Heart right ventricle (tissue), 16 donors: ENCODE measurements at regions of chr15 and their contacts with region 1.

Region 1: DNA sequence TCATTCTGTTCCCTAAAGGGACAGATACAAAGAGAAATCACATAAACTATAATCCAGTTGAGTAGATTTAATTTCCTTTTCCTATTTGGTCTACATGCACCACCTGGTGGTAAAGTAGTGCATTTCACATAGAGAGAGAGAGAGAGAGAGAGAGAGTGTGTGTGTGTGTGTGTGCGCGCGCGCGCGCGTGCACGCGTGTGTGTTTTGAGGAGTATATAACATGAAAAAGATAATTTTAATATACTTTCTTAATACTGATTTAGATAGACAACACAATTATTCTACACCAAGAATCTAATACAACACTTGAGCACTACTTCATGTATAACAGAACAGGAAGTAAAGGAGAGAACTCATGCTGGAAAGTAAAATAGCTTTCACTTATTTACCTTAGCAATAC is 1.1 kb upstream of the FGF7 start:
- DNase-seq: peak; percentile 24 to 47
- ATAC-seq: peak; percentile 45 to 78 (median 52)
- H3K4me3 ChIP-seq: peak overlapping the region in 9 of 10 donors; percentile 2 to 54 (median 23)
- H3K27ac ChIP-seq: peak overlapping the region in 4 of 10 donors; percentile 65 to 80 (median 76)
- H3K4me1 ChIP-seq: peaks cover 0 to 8% (median 0%) of the 10 kb centered on the region in 9 donors
- H3K27me3 ChIP-seq: no peaks in the 10 kb centered on the region
- CTCF ChIP-seq: peak; percentile 39 to 83 (median 70)

Region 2: DNA sequence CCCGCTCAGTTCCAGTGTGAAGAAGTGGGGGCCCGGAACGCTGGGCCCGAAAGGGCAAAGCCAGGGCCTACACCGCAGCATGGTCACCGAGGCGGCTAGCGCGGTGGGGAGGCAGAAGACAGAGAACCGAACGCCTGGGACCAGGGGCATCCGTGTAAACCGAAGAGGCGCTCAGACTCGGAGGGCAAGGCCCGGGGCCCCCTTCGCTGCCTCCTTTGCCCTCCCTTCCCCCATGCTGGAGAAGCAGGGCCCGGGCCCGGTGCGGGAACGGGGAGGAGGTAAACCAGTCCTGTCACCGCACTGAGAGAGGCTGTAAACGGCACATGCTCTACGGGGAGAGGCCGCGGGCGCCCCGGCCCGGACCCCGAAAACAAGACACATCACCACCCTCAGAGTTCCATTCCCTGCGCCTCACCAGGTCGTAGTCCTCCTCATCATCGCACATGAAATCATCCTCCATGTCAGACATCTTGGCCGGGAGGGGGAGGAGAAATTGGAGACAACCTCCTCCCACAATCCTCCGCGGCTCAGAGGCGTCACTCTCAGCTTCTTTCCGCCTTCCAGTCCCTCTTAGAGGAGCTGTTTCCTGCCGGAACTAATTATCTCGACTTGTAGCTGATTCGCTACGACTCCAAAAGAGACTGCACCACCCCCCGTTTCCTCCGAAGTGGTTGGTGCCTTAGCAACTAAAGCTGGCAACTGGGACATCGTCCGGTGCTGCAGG is 266.7 kb before region 1 on chr15 and contains the start of gene COPS2:
- intact Hi-C with region 1: loop called in 1 of 10 experiments (anchors 5 kb)
- DNase-seq: peak; percentile 86 to 96
- ATAC-seq: peak; percentile 98 to 99 (median 99)
- H3K4me3 ChIP-seq: peak within 1 kb of the TSS; percentile 84 to 98 (median 92)
- H3K27ac ChIP-seq: peak within 1 kb of the TSS; percentile 45 to 94 (median 88)
- H3K4me1 ChIP-seq: peaks cover 2 to 58% (median 41%) of the 10 kb centered on the region in 9 donors
- H3K27me3 ChIP-seq: no peaks in the 10 kb centered on the region
- CTCF ChIP-seq: peak in 1 of 9 donors; percentile 9
- total RNA-seq, gene COPS2: 71.3 to 91.8 (median 86.8) TPM

Region 3: DNA sequence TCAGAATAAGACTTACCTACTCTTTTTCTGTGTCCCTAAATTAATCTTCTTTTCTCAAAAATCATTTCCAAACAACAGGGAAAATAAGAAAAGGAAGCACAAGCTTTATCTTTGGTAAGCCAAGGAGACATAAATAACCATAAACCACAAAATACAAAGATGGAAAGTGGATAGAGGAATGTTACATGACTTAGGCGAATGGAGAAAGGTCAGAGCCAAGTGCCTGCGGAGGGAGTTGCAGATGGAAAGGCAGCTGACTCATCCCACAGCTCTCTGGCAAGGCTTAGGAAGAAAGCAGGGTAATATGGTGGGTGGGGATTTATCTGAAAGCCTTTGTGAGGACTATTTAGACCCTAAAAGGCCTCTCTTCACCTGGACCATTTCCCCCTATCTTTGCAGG is 179.2 kb before region 1 on chr15:
- intact Hi-C with region 1: loop called in 5 of 10 experiments (anchors 1 to 10 kb)
- DNase-seq: no peak
- ATAC-seq: peak in 3 of 8 donors; percentile 72 to 78 (median 74)
- H3K4me3 ChIP-seq: no peak overlapping the region
- H3K27ac ChIP-seq: peak overlapping the region in 1 of 10 donors; percentile 32
- H3K4me1 ChIP-seq: peaks cover 0 to 28% (median 9%) of the 10 kb centered on the region in 9 donors
- H3K27me3 ChIP-seq: no peaks in the 10 kb centered on the region
- CTCF ChIP-seq: no peak

Region 4: GRCh38 chr15:49270541-49271421 is 151.2 kb before region 1 on chr15:
- intact Hi-C with region 1: no loop called
- DNase-seq: peak in 1 of 2 donors; percentile 18
- ATAC-seq: peak in 7 of 8 donors; percentile 27 to 89 (median 64)
- H3K4me3 ChIP-seq: no peak overlapping the region
- H3K27ac ChIP-seq: peak overlapping the region in 1 of 10 donors; percentile 53
- H3K4me1 ChIP-seq: peaks cover 0 to 19% (median 5%) of the 10 kb centered on the region in 9 donors
- H3K27me3 ChIP-seq: no peaks in the 10 kb centered on the region
- CTCF ChIP-seq: no peak

Region 5: GRCh38 chr15:49645903-49646302 is 223.9 kb after region 1 on chr15:
- intact Hi-C with region 1: no loop called
- DNase-seq: no peak
- ATAC-seq: no peak
- H3K4me3 ChIP-seq: no peak overlapping the region
- H3K27ac ChIP-seq: peak overlapping the region in 7 of 10 donors; percentile 16 to 62 (median 37)
- H3K4me1 ChIP-seq: peaks cover 0 to 32% (median 25%) of the 10 kb centered on the region in 9 donors
- H3K27me3 ChIP-seq: no peaks in the 10 kb centered on the region
- CTCF ChIP-seq: no peak

Region 6: DNA sequence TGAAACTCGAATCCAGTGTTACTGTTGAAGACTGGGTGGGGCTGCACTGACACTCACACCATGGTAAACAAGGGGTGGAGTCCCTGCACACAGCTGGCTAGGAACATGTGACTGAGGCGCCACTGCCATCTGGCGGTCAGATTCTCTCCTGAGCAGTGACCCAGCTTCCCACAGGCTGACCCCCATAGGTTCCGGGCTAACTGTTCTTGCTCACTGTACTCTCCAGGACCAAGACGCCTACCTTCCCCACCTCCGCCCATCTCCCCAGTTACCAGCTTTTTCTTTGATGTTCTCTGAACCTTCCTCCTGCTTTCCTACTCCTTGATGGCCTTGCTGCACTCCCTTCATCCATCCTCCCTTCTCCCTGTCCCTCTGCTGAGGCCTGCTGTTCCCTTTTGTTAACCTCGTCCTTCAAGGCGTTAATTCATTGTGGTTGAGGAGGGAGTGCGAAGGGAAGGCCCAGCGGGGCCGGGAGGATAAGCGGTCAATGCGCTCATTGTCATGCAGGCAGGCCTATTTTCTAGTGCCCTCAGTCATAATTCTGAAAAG is 581.9 kb after region 1 on chr15:
- intact Hi-C with region 1: loop called in 1 of 10 experiments (anchors 5 kb)
- DNase-seq: peak; percentile 88 to 89
- ATAC-seq: peak; percentile 93 to 100 (median 99)
- H3K4me3 ChIP-seq: no peak overlapping the region
- H3K27ac ChIP-seq: peak overlapping the region in 6 of 10 donors; percentile 11 to 68 (median 42)
- H3K4me1 ChIP-seq: peaks cover 0 to 19% (median 4%) of the 10 kb centered on the region in 9 donors
- H3K27me3 ChIP-seq: no peaks in the 10 kb centered on the region
- CTCF ChIP-seq: peak; percentile 59 to 87 (median 79)